ENCODE measurements at regions of chr2 and their contacts with region 1.

Region 1: GRCh38 chr2:174013315-174013751 is 48.2 kb upstream of the SP3 start:
- DNase-seq: no peak
- H3K4me3 ChIP-seq: peak overlapping the region; percentile 16 to 53 (median 39)
- H3K27ac ChIP-seq: peak overlapping the region; percentile 79 to 91 (median 90)
- H3K4me1 ChIP-seq: peaks cover 0 to 24% (median 4%) of the 10 kb centered on the region in 4 donors
- H3K27me3 ChIP-seq: no peaks in the 10 kb centered on the region
- CTCF ChIP-seq: no peak
- EP300 ChIP-seq: no peak
- POLR2A ChIP-seq: peak; percentile 25

Region 2: GRCh38 chr2:173644146-173644545 is 369.2 kb before region 1 on chr2:
- in situ Hi-C with region 1: no loop called
- intact Hi-C with region 1: no loop called
- DNase-seq: no peak
- H3K4me3 ChIP-seq: no peak overlapping the region
- H3K27ac ChIP-seq: peak overlapping the region in 1 of 4 donors; percentile 21
- H3K4me1 ChIP-seq: no peaks in the 10 kb centered on the region
- H3K27me3 ChIP-seq: no peaks in the 10 kb centered on the region
- CTCF ChIP-seq: no peak
- EP300 ChIP-seq: no peak
- POLR2A ChIP-seq: no peak

Region 3: GRCh38 chr2:173965329-173966025 is 47.9 kb before region 1 on chr2 and contains the start of gene SP3:
- in situ Hi-C with region 1: no loop called
- intact Hi-C with region 1: no loop called
- DNase-seq: peak; percentile 97
- H3K4me3 ChIP-seq: peak within 1 kb of the TSS; percentile 70 to 99 (median 90)
- H3K27ac ChIP-seq: peak within 1 kb of the TSS; percentile 97 to 100 (median 98)
- H3K4me1 ChIP-seq: peaks cover 0 to 40% (median 23%) of the 10 kb centered on the region in 4 donors
- H3K27me3 ChIP-seq: no peaks in the 10 kb centered on the region
- CTCF ChIP-seq: peak in 1 of 5 experiments; percentile 9
- EP300 ChIP-seq: no peak
- POLR2A ChIP-seq: peak; percentile 93
- total RNA-seq, gene SP3: 41.9 to 101 (median 81.6) TPM

Region 4: DNA sequence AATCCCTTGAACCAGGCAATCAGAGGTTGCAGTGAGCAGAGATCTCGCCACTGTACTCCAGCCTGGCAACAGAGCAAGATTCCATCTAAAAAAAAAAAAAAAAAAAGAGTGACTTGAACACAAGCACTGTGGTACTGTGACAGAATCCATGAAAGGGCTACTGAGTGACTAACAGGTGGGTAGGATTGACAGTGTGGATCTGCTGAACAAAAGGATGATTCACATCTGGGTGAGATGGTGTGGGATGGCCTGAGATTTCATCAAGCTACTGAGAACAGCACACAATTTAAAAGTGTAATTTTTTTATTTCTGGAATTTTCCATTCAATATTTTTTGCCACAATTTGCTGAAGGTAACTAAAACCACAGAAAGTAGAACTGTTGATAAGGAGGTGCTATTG is 34.9 kb before region 1 on chr2:
- in situ Hi-C with region 1: no loop called
- intact Hi-C with region 1: loop called (anchors 1 kb)
- DNase-seq: no peak
- H3K4me3 ChIP-seq: no peak overlapping the region
- H3K27ac ChIP-seq: no peak overlapping the region
- H3K4me1 ChIP-seq: peaks cover 0 to 4% (median 0%) of the 10 kb centered on the region in 4 donors
- H3K27me3 ChIP-seq: no peaks in the 10 kb centered on the region
- CTCF ChIP-seq: no peak
- EP300 ChIP-seq: no peak
- POLR2A ChIP-seq: no peak